ENCODE measurements at regions of chr20 and their contacts with region 1.

Region 1: GRCh38 chr20:38446441-38447209 is 11.5 kb upstream of the SNHG17 start:
- DNase-seq: peak; percentile 75 to 92
- H3K4me3 ChIP-seq: peak overlapping the region; percentile 89
- H3K27ac ChIP-seq: peak overlapping the region; percentile 48; the same call in 1 of the 2 replicates
- H3K4me1 ChIP-seq: no peaks in the 10 kb centered on the region
- H3K27me3 ChIP-seq: no peaks in the 10 kb centered on the region
- CTCF ChIP-seq: peak; percentile 98

Region 2: DNA sequence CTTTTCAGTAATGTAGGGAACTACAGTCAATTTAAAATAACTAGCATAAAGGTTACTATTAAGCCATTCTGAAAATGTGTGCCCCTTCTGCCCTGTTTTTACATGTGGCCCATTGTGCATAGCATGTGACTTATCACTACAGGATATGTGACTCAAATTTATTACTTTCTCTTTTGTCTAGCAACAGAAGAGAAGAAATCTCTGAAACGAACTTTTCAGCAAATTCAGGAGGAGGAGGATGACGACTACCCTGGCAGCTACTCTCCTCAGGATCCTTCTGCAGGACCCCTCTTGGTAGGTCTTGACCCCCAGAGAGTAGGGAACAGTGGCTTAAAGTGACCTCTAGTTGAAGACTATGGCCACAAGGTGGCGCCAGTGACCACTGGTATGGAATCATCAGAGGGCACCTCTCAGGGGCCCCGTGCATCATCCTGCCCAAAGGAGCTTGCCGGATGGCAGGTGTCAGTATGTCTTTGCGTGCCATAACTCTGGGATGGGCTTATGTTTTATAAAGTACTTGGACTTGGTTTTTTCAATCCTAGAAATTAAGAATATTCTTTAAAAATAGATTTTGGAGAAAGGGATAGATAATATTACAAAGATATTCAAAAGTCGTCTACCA is 389.2 kb before region 1 on chr20:
- CTCF ChIA-PET with region 1: no interaction called
- POLR2A ChIA-PET with region 1: no interaction called
- intact Hi-C with region 1: no loop called
- DNase-seq: peak; percentile 53 to 76
- H3K4me3 ChIP-seq: no peak overlapping the region
- H3K27ac ChIP-seq: no peak overlapping the region
- H3K4me1 ChIP-seq: no peaks in the 10 kb centered on the region
- H3K27me3 ChIP-seq: no peaks in the 10 kb centered on the region
- CTCF ChIP-seq: peak; percentile 99

Region 3: DNA sequence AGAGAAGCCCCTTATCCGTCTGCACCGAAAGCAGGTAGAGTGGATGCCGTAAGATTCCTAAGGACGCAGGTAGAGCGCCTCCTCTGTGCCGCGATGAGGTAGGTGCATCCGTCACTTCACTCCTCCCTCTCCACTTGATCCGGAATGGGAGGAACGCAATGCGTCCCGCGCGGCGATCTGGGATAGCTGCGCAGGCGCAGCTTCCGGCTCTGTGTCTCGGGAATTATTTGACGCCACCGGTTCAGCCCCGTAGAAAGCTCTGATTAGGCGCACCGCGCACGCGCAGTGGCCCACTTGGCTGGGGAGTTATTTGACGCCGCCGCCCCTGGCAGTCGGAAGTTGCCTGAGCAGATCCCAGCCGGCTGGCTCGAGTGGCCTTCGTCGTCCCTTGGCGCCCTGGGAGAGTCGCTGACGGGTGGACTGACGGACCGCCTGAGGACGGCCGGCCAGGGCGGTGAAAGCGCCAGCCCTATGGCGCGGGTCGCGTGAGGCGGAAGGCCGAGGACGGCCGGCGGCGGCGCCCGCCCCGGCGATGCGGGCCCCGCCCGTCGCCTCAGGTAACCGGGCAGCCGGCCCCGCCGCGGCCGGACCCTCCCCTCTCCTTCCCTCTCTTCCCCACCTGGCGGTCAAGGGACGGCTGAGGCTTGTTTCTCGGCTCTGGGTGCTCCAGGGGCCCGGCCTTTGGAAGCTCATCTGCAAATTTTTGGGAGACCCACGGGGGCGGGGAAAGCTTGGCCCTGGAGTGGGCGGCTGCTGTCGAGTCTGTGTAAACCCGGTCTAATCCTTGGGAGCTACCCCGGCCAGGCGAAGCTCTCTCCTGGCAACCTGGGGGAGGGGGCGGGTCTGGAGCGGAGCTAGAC is 26.1 kb after region 1 on chr20 and contains the start of gene RALGAPB:
- CTCF ChIA-PET with region 1: interaction called, 10 read pairs
- POLR2A ChIA-PET with region 1: interaction called, 15 read pairs
- intact Hi-C with region 1: loop called (anchors 1 kb)
- DNase-seq: peak; percentile 98 to 100
- H3K4me3 ChIP-seq: peak within 1 kb of the TSS; percentile 88
- H3K27ac ChIP-seq: peak within 1 kb of the TSS; percentile 62
- H3K4me1 ChIP-seq: peaks cover 28% of the 10 kb centered on the region
- H3K27me3 ChIP-seq: no peaks in the 10 kb centered on the region
- CTCF ChIP-seq: peak; percentile 78
- total RNA-seq, gene RALGAPB: 35.2 and 40.2 TPM in 2 replicates

Region 4: GRCh38 chr20:38485041-38485440 is 38.4 kb after region 1 on chr20:
- CTCF ChIA-PET with region 1: no interaction called
- POLR2A ChIA-PET with region 1: no interaction called
- intact Hi-C with region 1: no loop called
- DNase-seq: no peak
- H3K4me3 ChIP-seq: no peak overlapping the region
- H3K27ac ChIP-seq: no peak overlapping the region
- H3K4me1 ChIP-seq: no peaks in the 10 kb centered on the region
- H3K27me3 ChIP-seq: no peaks in the 10 kb centered on the region
- CTCF ChIP-seq: no peak

Region 5: DNA sequence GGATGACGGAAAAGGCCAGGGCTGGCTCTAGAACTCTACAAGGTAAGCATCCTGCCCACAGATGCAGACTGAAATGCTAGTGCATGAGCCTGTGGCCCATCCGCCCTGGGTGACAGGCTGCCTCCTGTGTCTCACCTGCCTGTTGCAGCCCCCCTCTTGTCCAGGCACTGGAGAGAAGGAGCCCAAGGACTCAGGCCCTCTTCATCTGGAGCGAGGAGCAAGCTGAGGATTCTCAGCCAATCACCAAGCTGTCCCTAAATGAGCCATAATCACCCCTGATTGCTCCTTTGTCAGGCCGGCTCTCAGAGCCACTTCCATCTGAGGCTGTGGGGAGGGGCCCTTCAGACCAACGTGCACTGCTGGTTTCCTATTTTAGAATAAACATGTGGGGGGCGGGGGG is 267.7 kb after region 1 on chr20:
- CTCF ChIA-PET with region 1: no interaction called
- POLR2A ChIA-PET with region 1: no interaction called
- intact Hi-C with region 1: no loop called
- DNase-seq: no peak
- H3K4me3 ChIP-seq: no peak overlapping the region
- H3K27ac ChIP-seq: no peak overlapping the region
- H3K4me1 ChIP-seq: no peaks in the 10 kb centered on the region
- H3K27me3 ChIP-seq: peaks cover 94% of the 10 kb centered on the region
- CTCF ChIP-seq: no peak